ENCODE measurements at regions of chr21 and their contacts with region 1.

Region 1: DNA sequence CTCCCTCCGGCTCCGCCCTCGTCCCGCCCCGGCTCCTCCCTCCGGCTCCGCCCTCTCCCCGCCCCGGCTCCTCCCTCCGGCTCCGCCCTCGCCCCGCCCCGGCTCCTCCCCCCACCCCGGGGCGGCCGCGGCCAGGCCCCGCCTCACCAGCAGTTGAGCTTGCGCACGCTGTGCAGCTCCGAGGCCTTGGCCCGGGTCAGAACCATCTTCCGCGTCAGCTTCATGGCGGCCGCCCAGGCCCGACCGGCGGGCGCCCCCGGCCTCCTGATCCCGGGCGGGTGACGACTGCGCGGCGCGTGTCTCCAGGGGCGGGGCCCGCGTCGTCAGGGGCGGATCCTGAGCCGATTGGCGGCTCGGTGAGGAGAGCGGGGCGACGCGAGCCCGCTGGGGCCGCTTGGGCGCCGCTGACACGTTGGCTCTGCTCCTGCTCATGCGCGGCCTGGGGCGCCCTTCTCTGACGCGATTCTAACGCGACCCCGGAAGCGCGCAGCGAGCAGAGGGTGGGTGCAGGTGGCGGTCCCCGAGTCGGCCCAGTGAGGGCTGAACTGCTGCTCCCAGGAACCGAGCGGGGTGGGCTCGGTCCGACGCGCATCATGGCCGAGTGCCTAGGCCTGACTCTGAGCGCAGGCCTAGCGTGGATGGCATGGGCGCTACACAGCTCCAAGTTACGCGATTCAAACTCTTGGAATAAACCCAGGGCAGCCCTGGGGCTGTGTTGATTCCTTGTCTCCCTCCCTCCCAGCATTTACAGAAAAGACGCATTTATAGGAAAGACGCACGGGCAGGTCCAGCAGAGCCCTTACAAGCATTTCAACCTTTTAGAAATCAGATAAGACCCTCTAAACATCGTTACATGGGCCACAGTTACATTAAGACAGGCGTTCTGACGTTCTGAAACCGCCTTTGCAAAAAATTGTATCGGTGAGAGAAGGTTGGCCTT is at the start of gene CFAP410:
- DNase-seq: peak; percentile 87 to 98 (median 94)
- ATAC-seq: peak; percentile 88
- H3K4me3 ChIP-seq: peak within 1 kb of the TSS; percentile 90
- H3K4me3 Mint-ChIP-seq: peak within 1 kb of the TSS; percentile 93
- H3K27ac ChIP-seq: peak within 1 kb of the TSS; percentile 93 to 96
- H3K27ac Mint-ChIP-seq: peak within 1 kb of the TSS; percentile 99
- H3K4me1 ChIP-seq: peaks cover 20% of the 10 kb centered on the region
- H3K4me1 Mint-ChIP-seq: peaks cover 25% of the 10 kb centered on the region
- H3K27me3 ChIP-seq: no peaks in the 10 kb centered on the region
- H3K27me3 Mint-ChIP-seq: no peaks in the 10 kb centered on the region
- CTCF ChIP-seq: no peak
- total RNA-seq, gene CFAP410: 50.1 to 51.6 TPM

Region 2: DNA sequence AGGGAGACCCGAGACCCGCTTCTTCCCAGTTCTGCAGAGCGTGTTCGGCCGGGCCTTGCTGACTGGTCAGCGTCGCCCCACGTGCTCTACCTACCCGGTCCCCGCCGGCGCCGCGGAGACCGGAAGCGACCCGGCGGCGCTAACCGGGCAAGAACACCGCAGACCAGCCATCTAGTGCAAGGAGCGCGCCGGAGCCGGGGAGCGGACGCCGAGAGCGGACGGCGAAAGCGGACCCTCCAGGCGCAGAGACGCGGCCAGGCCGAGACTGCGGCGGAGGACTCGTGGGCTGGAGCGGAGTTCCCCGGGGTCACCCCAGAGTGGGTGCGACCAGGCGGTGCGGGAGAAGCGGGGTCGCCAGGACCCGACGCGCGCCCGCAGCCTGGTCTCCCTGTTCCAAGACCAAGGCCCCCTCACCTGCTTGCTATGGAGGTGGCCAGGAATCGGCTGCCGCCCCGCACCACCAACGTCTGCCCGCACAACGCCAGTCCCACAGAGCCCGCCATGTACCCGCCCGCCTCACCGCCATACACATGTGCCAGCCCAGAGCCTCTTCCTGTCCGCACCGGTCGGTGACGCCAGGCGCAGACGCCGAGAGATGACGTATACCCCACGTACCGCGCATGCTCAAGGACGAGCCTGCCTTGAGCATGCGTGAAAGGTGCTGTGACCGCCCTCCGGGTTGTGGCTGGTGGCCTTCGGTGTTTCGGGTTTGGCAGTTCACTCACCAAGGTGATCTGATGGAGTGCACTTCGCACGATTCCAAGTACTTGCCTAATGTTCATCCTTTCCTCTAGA is 1460.1 kb before region 1 on chr21 and contains the start of gene WDR4:
- CTCF ChIA-PET with region 1: no interaction called
- POLR2A ChIA-PET with region 1: no interaction called
- intact Hi-C with region 1: loop called in 1 of 2 experiments (anchors 10 kb)
- DNase-seq: peak; percentile 98 to 100 (median 98)
- ATAC-seq: peak; percentile 90
- H3K4me3 ChIP-seq: peak within 1 kb of the TSS; percentile 74
- H3K4me3 Mint-ChIP-seq: peak within 1 kb of the TSS; percentile 99
- H3K27ac ChIP-seq: peak within 1 kb of the TSS; percentile 80 to 93
- H3K27ac Mint-ChIP-seq: peak within 1 kb of the TSS; percentile 95
- H3K4me1 ChIP-seq: peaks cover 25% of the 10 kb centered on the region
- H3K4me1 Mint-ChIP-seq: peaks cover 33% of the 10 kb centered on the region
- H3K27me3 ChIP-seq: no peaks in the 10 kb centered on the region
- H3K27me3 Mint-ChIP-seq: no peaks in the 10 kb centered on the region
- CTCF ChIP-seq: no peak
- total RNA-seq, gene WDR4: 11.3 to 12.9 TPM

Region 3: GRCh38 chr21:44089001-44089911 is 250.0 kb before region 1 on chr21:
- CTCF ChIA-PET with region 1: no interaction called
- POLR2A ChIA-PET with region 1: no interaction called
- intact Hi-C with region 1: loop called in 1 of 2 experiments (anchors 10 kb)
- DNase-seq: peak; percentile 33 to 89 (median 55)
- ATAC-seq: peak; percentile 93
- H3K4me3 ChIP-seq: peak overlapping the region; percentile 24
- H3K4me3 Mint-ChIP-seq: peak overlapping the region; percentile 78
- H3K27ac ChIP-seq: peak overlapping the region; percentile 75 to 80
- H3K27ac Mint-ChIP-seq: peak overlapping the region; percentile 95
- H3K4me1 ChIP-seq: peaks cover 75% of the 10 kb centered on the region
- H3K4me1 Mint-ChIP-seq: peaks cover 66% of the 10 kb centered on the region
- H3K27me3 ChIP-seq: no peaks in the 10 kb centered on the region
- H3K27me3 Mint-ChIP-seq: no peaks in the 10 kb centered on the region
- CTCF ChIP-seq: no peak

Region 4: DNA sequence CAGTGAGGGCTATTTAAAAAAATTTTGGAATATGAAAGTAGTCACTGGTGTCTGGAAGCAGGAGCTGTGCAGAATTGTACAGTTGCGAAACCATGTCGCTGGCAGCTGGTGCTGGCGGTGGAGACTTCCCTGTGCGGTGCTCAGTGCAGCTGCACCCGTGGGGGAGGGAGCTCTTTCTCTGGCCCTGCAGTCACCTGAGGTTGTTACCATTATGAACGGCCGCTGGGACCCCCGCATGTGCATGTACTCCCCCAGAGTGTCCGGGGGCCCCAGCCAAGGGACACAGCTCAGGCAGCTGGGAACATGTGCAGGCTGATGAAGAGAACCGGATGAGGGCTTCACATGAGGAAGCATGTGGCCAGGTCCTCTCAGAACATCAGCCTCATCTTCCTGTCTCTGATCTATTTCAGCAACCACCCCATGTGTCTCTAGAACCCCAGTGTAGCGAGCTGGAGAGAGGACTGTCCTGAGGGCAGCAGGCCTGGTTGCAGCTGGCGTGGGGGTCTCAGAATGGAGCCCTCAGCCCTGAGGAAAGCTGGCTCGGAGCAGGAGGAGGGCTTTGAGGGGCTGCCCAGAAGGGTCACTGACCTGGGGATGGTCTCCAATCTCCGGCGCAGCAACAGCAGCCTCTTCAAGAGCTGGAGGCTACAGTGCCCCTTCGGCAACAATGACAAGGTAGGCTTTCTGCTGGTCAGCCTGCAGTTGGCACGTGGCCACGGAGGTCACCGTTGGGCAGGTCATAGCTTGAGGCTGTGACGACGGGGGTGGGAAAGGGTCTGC is 14.1 kb after region 1 on chr21 and contains the start of gene TRPM2:
- CTCF ChIA-PET with region 1: no interaction called
- POLR2A ChIA-PET with region 1: interaction called, 13 read pairs
- intact Hi-C with region 1: no loop called
- DNase-seq: peak in 7 of 14 experiments; percentile 19 to 59 (median 47)
- ATAC-seq: peak; percentile 78
- H3K4me3 ChIP-seq: peak within 1 kb of the TSS; percentile 29
- H3K4me3 Mint-ChIP-seq: peak within 1 kb of the TSS; percentile 80
- H3K27ac ChIP-seq: peak within 1 kb of the TSS in 1 of 2 donors; percentile 48
- H3K27ac Mint-ChIP-seq: peak within 1 kb of the TSS; percentile 55
- H3K4me1 ChIP-seq: peaks cover 57% of the 10 kb centered on the region
- H3K4me1 Mint-ChIP-seq: peaks cover 44% of the 10 kb centered on the region
- H3K27me3 ChIP-seq: peaks cover 15% of the 10 kb centered on the region in 2 experiments
- H3K27me3 Mint-ChIP-seq: peaks cover 10% of the 10 kb centered on the region
- CTCF ChIP-seq: no peak
- total RNA-seq, gene TRPM2: 1.9 to 2.9 TPM

Region 5: GRCh38 chr21:44817506-44817880 is 478.3 kb after region 1 on chr21:
- CTCF ChIA-PET with region 1: no interaction called
- POLR2A ChIA-PET with region 1: no interaction called
- intact Hi-C with region 1: loop called in 1 of 2 experiments (anchors 5 kb)
- DNase-seq: peak; percentile 87 to 97 (median 94)
- ATAC-seq: peak; percentile 85
- H3K4me3 ChIP-seq: peak overlapping the region; percentile 61
- H3K4me3 Mint-ChIP-seq: peak overlapping the region; percentile 82
- H3K27ac ChIP-seq: no peak overlapping the region
- H3K27ac Mint-ChIP-seq: peak overlapping the region; percentile 65
- H3K4me1 ChIP-seq: peaks cover 19% of the 10 kb centered on the region
- H3K4me1 Mint-ChIP-seq: peaks cover 13% of the 10 kb centered on the region
- H3K27me3 ChIP-seq: no peaks in the 10 kb centered on the region
- H3K27me3 Mint-ChIP-seq: no peaks in the 10 kb centered on the region
- CTCF ChIP-seq: no peak